ENCODE measurements at regions of chrX and their contacts with region 1.

Region 1: DNA sequence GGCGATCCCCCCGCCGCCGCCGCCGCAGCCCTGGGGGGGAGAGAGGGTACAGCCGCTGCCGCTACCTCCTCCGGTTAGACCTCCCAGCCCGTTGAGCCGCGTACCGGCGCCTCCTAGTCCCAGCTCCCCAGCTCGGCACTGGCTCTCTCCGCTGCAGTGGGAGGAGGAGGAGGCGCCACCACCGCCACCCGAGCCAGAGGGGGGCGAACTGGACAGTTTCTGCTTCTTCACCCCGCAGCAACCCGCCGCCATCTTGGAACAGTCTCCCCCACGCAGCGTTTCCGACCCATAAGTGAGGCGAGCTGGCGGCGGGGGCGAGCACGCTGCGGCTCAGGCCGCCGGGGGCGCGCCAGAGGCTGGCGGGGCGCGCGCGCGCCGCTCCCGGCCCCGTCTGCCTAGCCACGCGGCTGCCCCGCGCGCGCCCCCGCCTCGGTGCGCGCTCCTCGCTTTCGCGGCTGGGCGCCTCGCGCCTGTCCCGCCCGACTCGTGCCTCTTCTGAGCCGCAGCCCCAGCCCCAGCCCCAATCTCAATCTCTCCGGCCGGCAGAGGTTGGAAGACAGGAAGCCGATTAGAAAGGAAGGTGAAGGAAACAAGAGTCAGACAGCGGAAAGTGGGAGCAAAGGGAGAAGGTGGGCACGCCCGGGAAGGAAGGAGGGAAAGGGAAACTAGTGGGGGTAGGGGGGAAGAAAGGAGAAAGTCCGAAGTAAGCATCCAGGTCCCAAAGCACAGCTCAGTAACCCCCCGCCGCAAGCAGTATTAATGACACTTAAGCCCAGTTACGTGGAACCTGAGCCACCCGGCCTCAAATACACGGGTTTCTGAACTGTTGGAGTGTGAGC is at the start of gene AMMECR1:
- DNase-seq: peak; percentile 74
- H3K4me3 Mint-ChIP-seq: peak within 1 kb of the TSS; percentile 91
- H3K27ac Mint-ChIP-seq: peak within 1 kb of the TSS; percentile 84
- H3K4me1 Mint-ChIP-seq: peaks cover 23% of the 10 kb centered on the region
- H3K27me3 Mint-ChIP-seq: peaks cover 9% of the 10 kb centered on the region
- total RNA-seq, gene AMMECR1: 11.9 and 14.1 TPM in 2 replicates

Region 2: GRCh38 chrX:110002300-110003166 is 315.5 kb before region 1 on chrX and contains the start of gene TMEM164:
- intact Hi-C with region 1: loop called (anchors 5 kb)
- DNase-seq: peak; percentile 72
- H3K4me3 Mint-ChIP-seq: peak within 1 kb of the TSS; percentile 92
- H3K27ac Mint-ChIP-seq: peak within 1 kb of the TSS; percentile 92
- H3K4me1 Mint-ChIP-seq: peaks cover 23% of the 10 kb centered on the region
- H3K27me3 Mint-ChIP-seq: no peaks in the 10 kb centered on the region
- total RNA-seq, gene TMEM164: 17.9 and 19.1 TPM in 2 replicates

Region 3: GRCh38 chrX:110167952-110168451 is 150.0 kb before region 1 on chrX:
- intact Hi-C with region 1: no loop called
- DNase-seq: peak; percentile 10
- H3K4me3 Mint-ChIP-seq: no peak overlapping the region
- H3K27ac Mint-ChIP-seq: no peak overlapping the region
- H3K4me1 Mint-ChIP-seq: no peaks in the 10 kb centered on the region
- H3K27me3 Mint-ChIP-seq: no peaks in the 10 kb centered on the region

Region 4: DNA sequence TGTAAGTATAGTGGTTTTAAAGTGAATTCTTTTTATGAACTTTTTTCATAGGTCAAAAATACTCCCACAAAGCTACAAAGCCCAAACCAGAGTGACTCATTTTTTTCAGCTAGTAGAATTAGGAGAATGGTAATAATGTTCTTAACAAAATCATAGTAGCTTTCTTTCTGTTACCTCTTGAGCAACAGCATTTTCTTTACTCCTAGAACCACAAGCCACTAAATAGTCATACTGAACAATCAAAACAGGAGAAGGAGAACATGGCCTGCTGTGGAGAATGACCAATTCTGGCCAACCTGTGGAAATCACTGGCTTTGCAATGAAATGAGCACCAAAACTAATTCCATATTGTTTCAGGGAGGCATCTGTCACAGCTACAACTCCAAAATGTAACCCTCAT is 113.1 kb before region 1 on chrX:
- intact Hi-C with region 1: loop called (anchors 10 kb)
- DNase-seq: no peak
- H3K4me3 Mint-ChIP-seq: no peak overlapping the region
- H3K27ac Mint-ChIP-seq: no peak overlapping the region
- H3K4me1 Mint-ChIP-seq: peaks cover 6% of the 10 kb centered on the region
- H3K27me3 Mint-ChIP-seq: no peaks in the 10 kb centered on the region

Region 5: DNA sequence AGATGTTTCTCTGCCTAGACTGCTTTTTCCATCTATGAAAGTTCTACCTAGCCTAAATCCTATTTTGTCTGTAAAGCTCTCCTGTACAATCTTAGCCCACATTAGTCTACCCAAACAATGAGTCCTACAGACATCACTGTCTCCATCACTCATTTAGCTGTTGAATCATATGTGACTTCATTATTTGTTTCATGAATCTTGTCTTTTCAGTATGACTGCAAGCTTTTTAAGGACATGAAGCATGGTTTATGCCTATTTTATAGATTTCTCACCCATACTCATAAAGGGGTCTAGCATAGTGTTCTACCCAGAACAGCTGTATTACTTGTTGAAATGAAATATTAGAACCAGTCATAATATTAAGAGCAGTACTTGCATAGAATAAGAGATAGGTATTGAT is 13.2 kb before region 1 on chrX:
- intact Hi-C with region 1: no loop called
- DNase-seq: no peak
- H3K4me3 Mint-ChIP-seq: no peak overlapping the region
- H3K27ac Mint-ChIP-seq: no peak overlapping the region
- H3K4me1 Mint-ChIP-seq: peaks cover 7% of the 10 kb centered on the region
- H3K27me3 Mint-ChIP-seq: no peaks in the 10 kb centered on the region

Region 6: DNA sequence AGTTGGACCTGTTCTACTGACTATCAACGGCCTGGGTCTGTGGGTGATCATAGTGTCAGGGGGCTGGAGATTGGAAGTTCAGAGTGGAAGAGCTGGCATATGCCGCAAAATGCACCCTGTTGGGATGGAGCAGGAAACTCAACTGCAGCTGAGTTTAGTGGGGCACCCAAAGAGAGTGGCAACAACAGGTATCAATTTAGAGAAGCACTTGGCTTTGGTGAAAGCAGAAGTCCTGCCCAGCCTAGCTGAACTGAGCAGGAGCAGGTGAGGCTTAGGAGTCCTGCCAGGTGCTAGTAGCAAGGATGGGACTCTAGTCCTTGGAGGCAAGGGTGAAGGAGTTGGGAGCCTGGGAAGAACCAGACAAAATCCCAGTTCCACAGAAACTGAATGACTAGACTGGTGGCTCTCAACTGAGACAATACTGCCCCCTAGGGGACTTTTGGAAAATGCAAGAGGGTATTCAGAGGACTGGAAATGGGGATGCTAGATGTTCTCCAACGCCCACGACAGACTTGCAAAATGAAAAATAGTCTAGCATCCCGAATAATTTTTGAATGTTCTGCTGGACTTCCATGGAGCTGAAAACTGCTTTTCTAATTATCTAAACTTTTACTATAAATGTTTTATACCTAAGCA is 90.0 kb after region 1 on chrX:
- intact Hi-C with region 1: loop called (anchors 5 kb)
- DNase-seq: peak; percentile 6
- H3K4me3 Mint-ChIP-seq: no peak overlapping the region
- H3K27ac Mint-ChIP-seq: no peak overlapping the region
- H3K4me1 Mint-ChIP-seq: peaks cover 7% of the 10 kb centered on the region
- H3K27me3 Mint-ChIP-seq: peaks cover 2% of the 10 kb centered on the region

Region 7: DNA sequence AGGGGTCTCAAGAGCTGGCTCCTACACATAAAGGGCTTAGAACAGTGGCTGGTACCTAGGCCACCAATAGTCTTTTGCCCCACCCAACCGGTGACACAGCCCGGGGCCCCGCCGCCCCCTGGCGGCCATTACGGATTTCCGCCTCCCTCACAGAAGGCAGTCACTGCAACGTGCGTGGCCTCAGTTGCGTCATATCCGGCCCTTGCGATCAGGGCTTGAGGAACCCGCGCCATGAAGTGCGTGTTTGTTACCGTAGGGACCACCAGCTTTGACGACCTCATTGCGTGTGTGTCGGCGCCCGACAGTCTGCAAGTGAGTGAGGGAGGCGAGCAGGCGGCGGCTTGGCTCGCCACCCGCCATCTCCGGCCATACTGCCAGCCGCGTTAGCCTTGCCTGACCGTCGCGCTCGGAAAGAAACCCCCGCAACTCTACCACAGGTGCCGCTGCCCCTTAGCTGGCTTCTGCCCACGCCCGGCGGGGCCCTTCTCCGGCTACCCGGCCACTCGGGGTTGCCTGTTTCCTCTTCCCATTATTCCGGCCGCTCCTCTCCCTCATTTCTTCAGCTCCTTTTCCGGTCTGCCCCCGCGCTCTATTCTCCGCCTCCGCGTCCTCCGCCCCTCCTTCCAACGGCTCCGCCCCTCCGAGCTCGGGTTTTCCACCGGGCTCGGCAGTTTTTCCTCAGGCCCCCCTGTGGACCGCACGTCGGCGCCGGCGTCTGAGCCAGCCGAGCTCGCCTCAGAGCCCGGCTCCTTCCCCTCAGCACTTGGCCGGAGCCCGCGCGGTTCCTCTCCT is 1363.1 kb after region 1 on chrX and contains the start of gene ALG13:
- intact Hi-C with region 1: loop called (anchors 5 kb)
- DNase-seq: peak; percentile 79
- H3K4me3 Mint-ChIP-seq: peak within 1 kb of the TSS; percentile 88
- H3K27ac Mint-ChIP-seq: peak within 1 kb of the TSS; percentile 96
- H3K4me1 Mint-ChIP-seq: peaks cover 23% of the 10 kb centered on the region
- H3K27me3 Mint-ChIP-seq: no peaks in the 10 kb centered on the region
- total RNA-seq, gene ALG13: 53.4 and 57.6 TPM in 2 replicates